Sigmoid colon (tissue), 7 donors: ENCODE measurements at regions of chr7 and their contacts with region 1.

Region 1: GRCh38 chr7:42232275-42232674 is 4.7 kb downstream of the GLI3 start:
- DNase-seq: peak; percentile 78
- H3K4me3 ChIP-seq: no peak overlapping the region
- H3K27ac ChIP-seq: peak overlapping the region in 3 of 4 donors; percentile 96 to 97 (median 97)
- H3K4me1 ChIP-seq: peaks cover 0 to 82% (median 68%) of the 10 kb centered on the region in 4 donors
- H3K27me3 ChIP-seq: no peaks in the 10 kb centered on the region
- CTCF ChIP-seq: no peak
- EP300 ChIP-seq: peak in 1 of 4 donors; percentile 13
- POLR2A ChIP-seq: no peak

Region 2: DNA sequence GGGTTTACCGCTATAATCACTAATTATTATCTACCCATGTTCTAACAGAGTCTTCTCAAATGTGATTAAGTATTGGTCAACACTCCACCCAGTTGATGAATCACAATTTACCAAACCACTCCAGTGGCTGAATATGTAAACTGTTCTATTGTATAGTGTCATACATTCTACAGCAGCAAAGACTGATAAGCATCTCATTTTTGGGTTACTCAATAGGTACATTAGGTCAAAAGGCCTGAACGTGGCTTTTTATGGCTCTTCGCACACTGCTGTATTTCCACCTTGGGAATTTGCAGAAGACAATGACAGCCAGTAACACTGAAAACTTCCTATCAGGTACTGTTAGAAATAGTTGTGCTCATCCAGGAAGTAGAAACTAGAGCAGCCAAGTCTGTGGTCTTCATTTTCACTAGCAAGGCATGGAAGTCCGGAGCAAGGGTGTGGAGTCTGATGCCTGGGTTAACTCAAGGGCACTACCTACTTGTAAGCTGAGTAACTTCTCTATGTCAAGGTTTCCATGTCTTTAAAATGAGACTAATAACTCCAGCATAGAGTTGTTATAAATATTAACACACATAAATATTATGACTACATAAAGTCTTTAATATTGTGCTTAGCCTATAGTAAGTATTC is 162.1 kb before region 1 on chr7:
- intact Hi-C with region 1: no loop called
- DNase-seq: no peak
- H3K4me3 ChIP-seq: no peak overlapping the region
- H3K27ac ChIP-seq: no peak overlapping the region
- H3K4me1 ChIP-seq: peaks cover 0 to 51% (median 26%) of the 10 kb centered on the region in 4 donors
- H3K27me3 ChIP-seq: no peaks in the 10 kb centered on the region
- CTCF ChIP-seq: no peak
- EP300 ChIP-seq: no peak
- POLR2A ChIP-seq: no peak

Region 3: GRCh38 chr7:42080841-42081586 is 151.3 kb before region 1 on chr7:
- intact Hi-C with region 1: no loop called
- DNase-seq: no peak
- H3K4me3 ChIP-seq: no peak overlapping the region
- H3K27ac ChIP-seq: peak overlapping the region in 3 of 4 donors; percentile 49 to 66 (median 59)
- H3K4me1 ChIP-seq: peaks cover 0 to 76% (median 52%) of the 10 kb centered on the region in 4 donors
- H3K27me3 ChIP-seq: no peaks in the 10 kb centered on the region
- CTCF ChIP-seq: no peak
- EP300 ChIP-seq: no peak
- POLR2A ChIP-seq: no peak

Region 4: DNA sequence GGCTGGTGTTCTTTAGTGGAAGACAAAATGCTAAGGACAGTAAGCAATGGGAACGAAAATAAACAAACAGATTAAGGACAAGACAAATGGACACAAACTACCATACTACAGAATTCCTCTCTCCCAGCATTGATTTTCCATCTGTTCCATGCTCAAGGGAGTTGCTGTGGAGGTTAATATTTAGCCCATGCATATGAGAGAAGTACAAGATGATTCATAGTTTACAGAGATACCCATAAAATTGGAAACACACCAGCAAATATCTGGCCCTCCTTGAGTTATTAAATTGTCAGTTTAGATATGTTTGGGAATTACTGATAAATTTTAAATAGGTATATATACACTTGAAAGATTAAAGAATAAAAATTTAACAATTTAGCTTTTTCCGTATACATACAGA is 65.1 kb before region 1 on chr7:
- intact Hi-C with region 1: loop called (anchors 5 kb)
- DNase-seq: no peak
- H3K4me3 ChIP-seq: no peak overlapping the region
- H3K27ac ChIP-seq: peak overlapping the region in 3 of 4 donors; percentile 51 to 52 (median 51)
- H3K4me1 ChIP-seq: peaks cover 0 to 44% (median 34%) of the 10 kb centered on the region in 4 donors
- H3K27me3 ChIP-seq: no peaks in the 10 kb centered on the region
- CTCF ChIP-seq: no peak
- EP300 ChIP-seq: no peak
- POLR2A ChIP-seq: no peak

Region 5: GRCh38 chr7:42407828-42408227 is 175.6 kb after region 1 on chr7:
- intact Hi-C with region 1: no loop called
- DNase-seq: no peak
- H3K4me3 ChIP-seq: no peak overlapping the region
- H3K27ac ChIP-seq: no peak overlapping the region
- H3K4me1 ChIP-seq: peaks cover 0 to 5% (median 0%) of the 10 kb centered on the region in 4 donors
- H3K27me3 ChIP-seq: no peaks in the 10 kb centered on the region
- CTCF ChIP-seq: no peak
- EP300 ChIP-seq: no peak
- POLR2A ChIP-seq: no peak